Activated CD8-positive, alpha-beta T cell treated with anti-CD3 and anti-CD28 coated beads, Interleukin-2, amount 10 ng/mL, durations not matched to agents 7 days and 5 days (primary cell): ENCODE measurements at regions of chr6 and their contacts with region 1.

Region 1: DNA sequence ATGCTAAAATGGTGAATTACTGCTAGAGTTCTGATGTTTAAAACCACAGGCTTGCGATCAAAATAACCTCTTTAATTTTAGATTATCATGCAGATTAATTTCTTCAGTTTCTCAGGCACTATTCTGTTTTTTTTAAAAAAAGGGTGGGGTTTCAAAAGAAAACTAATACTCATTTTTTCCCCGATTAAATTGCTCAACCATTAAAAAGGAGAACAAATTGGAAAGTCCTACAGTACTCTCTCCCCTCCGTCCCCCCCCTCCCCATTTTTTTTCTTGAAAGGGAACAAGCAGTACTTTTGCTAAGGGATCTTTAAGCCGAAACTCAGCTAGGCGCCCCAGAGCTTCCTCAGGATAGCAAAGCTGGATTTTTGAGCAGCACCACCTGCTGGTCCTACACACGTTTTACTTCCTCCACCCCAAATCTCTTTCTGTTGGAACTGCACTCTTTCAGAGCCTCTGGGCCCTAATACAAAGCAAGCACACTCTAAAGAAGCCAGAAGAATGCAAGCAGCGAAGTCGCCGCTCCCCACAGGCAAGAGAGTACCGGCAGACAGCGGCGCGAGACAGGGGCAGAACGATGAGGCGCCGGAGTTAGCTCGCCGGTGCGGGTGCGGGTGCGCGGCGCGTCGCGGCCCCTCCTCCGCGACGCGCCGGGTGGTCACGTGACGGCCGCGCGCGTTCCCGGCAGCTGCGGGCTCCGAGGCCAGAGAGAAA is at the start of gene RNF146:
- DNase-seq: peak; percentile 77
- ATAC-seq: peak; percentile 85
- H3K4me3 Mint-ChIP-seq: peak within 1 kb of the TSS; percentile 96
- H3K27ac Mint-ChIP-seq: peak within 1 kb of the TSS; percentile 100
- H3K4me1 Mint-ChIP-seq: peaks cover 33% of the 10 kb centered on the region
- H3K27me3 Mint-ChIP-seq: peaks cover 6% of the 10 kb centered on the region
- total RNA-seq, gene RNF146: 14.7 to 18.0 TPM

Region 2: DNA sequence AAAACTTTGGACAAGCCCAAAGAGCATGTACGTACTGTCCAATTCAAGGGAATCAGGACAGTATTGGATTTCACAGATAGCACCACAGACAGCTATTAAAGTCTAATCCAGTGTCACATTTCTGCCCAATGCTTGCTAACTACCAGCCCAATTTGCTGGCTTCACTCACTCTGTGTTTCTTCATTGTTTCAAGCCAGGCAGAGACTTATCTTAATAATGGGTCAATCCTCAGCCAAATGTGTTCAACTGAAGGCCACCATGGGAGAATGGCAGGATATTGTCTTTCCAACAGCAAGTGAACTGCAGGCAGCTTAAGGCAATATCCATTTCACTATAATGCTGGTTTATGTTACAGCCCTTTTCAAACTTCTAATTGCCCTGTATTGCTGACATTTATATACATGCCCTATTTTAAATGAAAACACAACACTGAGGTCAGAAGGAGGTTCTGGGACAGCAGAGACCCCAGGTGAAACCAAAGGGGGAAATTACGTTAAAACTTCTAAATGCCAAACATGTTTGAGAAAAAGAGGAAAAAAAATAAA is 290.0 kb before region 1 on chr6:
- CTCF ChIA-PET with region 1: no interaction called
- POLR2A ChIA-PET with region 1: no interaction called
- DNase-seq: no peak
- ATAC-seq: no peak
- H3K4me3 Mint-ChIP-seq: no peak overlapping the region
- H3K27ac Mint-ChIP-seq: no peak overlapping the region
- H3K4me1 Mint-ChIP-seq: no peaks in the 10 kb centered on the region
- H3K27me3 Mint-ChIP-seq: no peaks in the 10 kb centered on the region

Region 3: GRCh38 chr6:127186889-127187288 is 79.4 kb before region 1 on chr6:
- CTCF ChIA-PET with region 1: interaction called, 19 read pairs
- POLR2A ChIA-PET with region 1: no interaction called
- DNase-seq: peak; percentile 71
- ATAC-seq: no peak
- H3K4me3 Mint-ChIP-seq: no peak overlapping the region
- H3K27ac Mint-ChIP-seq: no peak overlapping the region
- H3K4me1 Mint-ChIP-seq: no peaks in the 10 kb centered on the region
- H3K27me3 Mint-ChIP-seq: peaks cover 6% of the 10 kb centered on the region

Region 4: DNA sequence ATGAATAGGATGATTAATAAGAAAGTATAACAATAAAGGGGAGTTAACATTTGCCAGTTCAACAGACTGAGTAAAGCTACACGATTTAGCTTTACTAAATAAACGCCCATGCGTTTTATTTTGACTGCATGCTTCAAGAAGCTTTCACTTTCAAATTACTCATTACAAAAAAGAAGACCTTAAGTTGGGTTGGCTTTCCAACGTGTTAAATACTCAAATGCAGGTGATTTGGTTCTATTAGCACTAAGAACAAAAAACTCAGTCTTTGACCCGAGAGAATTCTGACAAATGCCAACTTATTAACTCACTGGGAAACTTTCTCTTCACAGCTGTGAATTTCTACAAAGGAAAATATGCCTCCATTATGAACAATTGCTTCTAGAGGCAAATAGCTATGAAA is 25.2 kb after region 1 on chr6:
- CTCF ChIA-PET with region 1: interaction called, 12 read pairs
- POLR2A ChIA-PET with region 1: interaction called, 3 read pairs
- DNase-seq: no peak
- ATAC-seq: no peak
- H3K4me3 Mint-ChIP-seq: peak overlapping the region; percentile 25
- H3K27ac Mint-ChIP-seq: no peak overlapping the region
- H3K4me1 Mint-ChIP-seq: peaks cover 13% of the 10 kb centered on the region
- H3K27me3 Mint-ChIP-seq: no peaks in the 10 kb centered on the region

Region 5: GRCh38 chr6:127342946-127343808 is 76.8 kb after region 1 on chr6 and contains the start of gene ECHDC1:
- CTCF ChIA-PET with region 1: interaction called, 12 read pairs
- POLR2A ChIA-PET with region 1: interaction called, 8 read pairs
- DNase-seq: peak; percentile 85
- ATAC-seq: peak; percentile 90
- H3K4me3 Mint-ChIP-seq: no peak within 1 kb of the TSS
- H3K27ac Mint-ChIP-seq: no peak within 1 kb of the TSS
- H3K4me1 Mint-ChIP-seq: no peaks in the 10 kb centered on the region
- H3K27me3 Mint-ChIP-seq: no peaks in the 10 kb centered on the region
- total RNA-seq, gene ECHDC1: 44.0 to 47.1 TPM

Region 6: GRCh38 chr6:127446356-127446755 is 180.0 kb after region 1 on chr6:
- CTCF ChIA-PET with region 1: no interaction called
- POLR2A ChIA-PET with region 1: no interaction called
- DNase-seq: no peak
- ATAC-seq: no peak
- H3K4me3 Mint-ChIP-seq: no peak overlapping the region
- H3K27ac Mint-ChIP-seq: no peak overlapping the region
- H3K4me1 Mint-ChIP-seq: no peaks in the 10 kb centered on the region
- H3K27me3 Mint-ChIP-seq: no peaks in the 10 kb centered on the region